Stomach (tissue), 19 donors: ENCODE measurements at regions of chr13 and their contacts with region 1.

Region 1: GRCh38 chr13:27523346-27524073 is 73.1 kb upstream of the MTIF3 start:
- DNase-seq: peak in 1 of 2 donors; percentile 14
- H3K4me3 ChIP-seq: no peak overlapping the region
- H3K27ac ChIP-seq: no peak overlapping the region
- H3K4me1 ChIP-seq: no peaks in the 10 kb centered on the region
- H3K27me3 ChIP-seq: peaks cover 0 to 11% (median 0%) of the 10 kb centered on the region in 3 donors
- CTCF ChIP-seq: no peak
- EP300 ChIP-seq: no peak
- POLR2A ChIP-seq: no peak

Region 2: GRCh38 chr13:26867451-26868091 is 655.9 kb before region 1 on chr13:
- intact Hi-C with region 1: no loop called
- DNase-seq: peak in 1 of 2 donors; percentile 71
- H3K4me3 ChIP-seq: no peak overlapping the region
- H3K27ac ChIP-seq: no peak overlapping the region
- H3K4me1 ChIP-seq: no peaks in the 10 kb centered on the region
- H3K27me3 ChIP-seq: peaks cover 0 to 30% (median 0%) of the 10 kb centered on the region in 3 donors
- CTCF ChIP-seq: no peak
- EP300 ChIP-seq: no peak
- POLR2A ChIP-seq: no peak

Region 3: DNA sequence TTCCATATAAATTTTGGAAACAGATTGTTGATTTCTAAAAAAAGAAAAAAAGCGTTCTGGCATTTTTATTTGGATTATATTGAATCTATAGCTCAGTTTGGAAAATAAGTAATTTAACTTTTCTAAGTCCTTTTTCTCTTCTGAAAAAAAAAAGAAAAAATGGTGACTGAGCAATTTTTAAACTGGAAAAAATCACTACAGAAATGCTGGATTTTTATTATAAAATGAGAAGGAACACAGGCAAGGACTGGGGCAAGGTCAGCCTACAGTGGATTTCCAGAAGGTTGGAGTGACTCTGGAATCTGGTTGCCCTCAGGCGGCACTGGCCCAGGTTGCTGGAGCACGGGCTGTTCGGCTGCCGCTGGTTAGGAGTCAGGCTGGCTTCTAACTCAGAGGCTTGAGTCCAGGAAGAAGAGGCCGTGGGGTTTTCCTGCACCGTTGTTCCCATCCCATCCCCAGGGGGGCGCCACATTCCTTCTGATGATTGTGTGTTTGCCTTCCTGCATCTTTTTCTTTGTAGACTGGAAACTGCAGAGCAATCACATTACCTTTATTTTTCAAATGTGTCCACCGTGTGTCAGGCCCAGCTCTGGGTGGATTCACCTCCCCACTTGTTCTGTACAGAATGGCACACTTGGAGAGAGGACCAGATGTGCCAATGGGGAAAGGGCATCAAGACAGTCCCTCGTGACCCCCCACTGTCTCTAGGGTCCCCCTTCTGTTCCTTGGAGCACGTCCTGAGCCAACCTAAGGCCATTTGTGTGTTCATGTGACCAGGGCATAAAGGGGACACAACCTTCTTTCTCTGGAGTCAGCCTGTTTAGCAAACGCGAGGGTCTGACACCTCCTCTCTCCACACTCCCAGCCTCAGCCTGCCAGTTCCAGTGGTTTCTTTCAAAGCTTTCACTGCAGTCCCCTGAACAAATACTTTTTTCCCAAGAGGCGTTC is 143.5 kb before region 1 on chr13:
- intact Hi-C with region 1: loop called (anchors 10 kb)
- DNase-seq: peak; percentile 87 to 88
- H3K4me3 ChIP-seq: no peak overlapping the region
- H3K27ac ChIP-seq: no peak overlapping the region
- H3K4me1 ChIP-seq: peaks cover 0 to 15% (median 4%) of the 10 kb centered on the region in 4 donors
- H3K27me3 ChIP-seq: peaks cover 0 to 16% (median 0%) of the 10 kb centered on the region in 3 donors
- CTCF ChIP-seq: peak in 5 of 7 experiments; percentile 53 to 75 (median 70)
- EP300 ChIP-seq: no peak
- POLR2A ChIP-seq: no peak